ENCODE measurements at regions of chrX and their contacts with region 1.

Region 1: DNA sequence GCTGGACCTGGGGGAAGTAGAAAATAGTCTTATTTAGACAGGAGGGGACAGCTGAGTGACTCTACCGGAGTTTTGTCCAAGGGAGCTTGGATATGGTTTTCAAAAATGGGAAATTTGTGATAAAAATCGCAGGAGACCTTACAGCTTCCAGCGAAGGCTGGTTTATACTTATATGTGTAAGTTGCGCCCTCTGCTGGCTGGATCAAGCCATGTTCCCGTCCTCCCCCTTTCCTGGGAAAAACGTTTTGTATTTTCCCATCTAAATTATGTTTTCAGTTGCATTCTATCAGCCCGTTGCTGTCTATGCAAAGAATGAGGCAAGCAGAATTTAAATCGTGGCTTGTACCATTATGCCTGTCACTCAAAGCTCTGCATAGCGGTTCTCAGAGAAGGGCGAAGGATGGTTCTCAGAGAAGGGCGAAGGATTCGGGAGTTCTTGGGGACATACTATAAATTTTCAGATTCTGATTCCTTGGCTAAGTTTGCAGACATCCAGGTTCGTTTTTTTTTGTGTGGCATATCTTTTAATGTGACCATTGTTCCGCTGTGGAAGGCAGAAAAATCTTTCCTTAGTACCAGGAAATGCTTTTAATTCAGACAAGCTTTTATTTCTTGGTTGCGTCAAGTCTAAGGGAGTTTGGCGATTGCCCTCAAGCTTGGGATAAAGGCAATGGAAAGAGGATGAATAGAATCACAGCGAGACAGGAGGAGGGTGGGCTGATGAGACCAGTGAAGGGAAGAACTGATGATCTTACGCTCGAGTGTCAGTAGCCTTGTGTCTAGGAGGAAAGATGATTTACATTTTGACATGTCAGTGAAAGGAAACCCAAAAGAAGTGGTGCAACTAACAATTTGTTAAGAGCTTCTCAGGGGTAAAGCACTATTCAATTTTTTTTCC is 128.5 kb upstream of the ARX start:
- DNase-seq: peak; percentile 68

Region 2: GRCh38 chrX:25034889-25035288 is 109.4 kb before region 1 on chrX:
- in situ Hi-C with region 1: loop called (anchors 10 kb)
- DNase-seq: peak; percentile 64

Region 3: DNA sequence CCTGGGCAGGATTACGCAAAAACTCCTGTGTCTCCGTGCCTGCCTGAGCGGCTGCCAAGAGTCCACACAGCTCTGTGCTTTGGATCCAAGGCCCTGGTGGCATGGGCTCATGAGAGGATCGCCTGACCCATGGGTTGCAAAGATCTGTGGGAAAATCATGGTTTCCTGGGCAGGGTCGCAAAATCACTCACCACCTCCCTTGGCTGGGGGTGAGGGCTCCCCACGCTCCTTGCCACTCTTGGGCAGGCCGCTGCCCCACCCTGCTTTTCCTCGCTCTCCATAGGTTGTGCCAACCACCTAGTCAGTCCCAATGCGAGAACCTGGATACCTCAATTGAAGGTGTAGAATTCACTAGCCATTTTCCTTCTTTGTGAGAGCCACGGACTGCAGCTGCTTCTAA is 927.3 kb after region 1 on chrX:
- in situ Hi-C with region 1: no loop called
- DNase-seq: no peak

Measured in KBM-7 (cell line).